ENCODE measurements at regions of chr1 and their contacts with region 1.

Region 1: DNA sequence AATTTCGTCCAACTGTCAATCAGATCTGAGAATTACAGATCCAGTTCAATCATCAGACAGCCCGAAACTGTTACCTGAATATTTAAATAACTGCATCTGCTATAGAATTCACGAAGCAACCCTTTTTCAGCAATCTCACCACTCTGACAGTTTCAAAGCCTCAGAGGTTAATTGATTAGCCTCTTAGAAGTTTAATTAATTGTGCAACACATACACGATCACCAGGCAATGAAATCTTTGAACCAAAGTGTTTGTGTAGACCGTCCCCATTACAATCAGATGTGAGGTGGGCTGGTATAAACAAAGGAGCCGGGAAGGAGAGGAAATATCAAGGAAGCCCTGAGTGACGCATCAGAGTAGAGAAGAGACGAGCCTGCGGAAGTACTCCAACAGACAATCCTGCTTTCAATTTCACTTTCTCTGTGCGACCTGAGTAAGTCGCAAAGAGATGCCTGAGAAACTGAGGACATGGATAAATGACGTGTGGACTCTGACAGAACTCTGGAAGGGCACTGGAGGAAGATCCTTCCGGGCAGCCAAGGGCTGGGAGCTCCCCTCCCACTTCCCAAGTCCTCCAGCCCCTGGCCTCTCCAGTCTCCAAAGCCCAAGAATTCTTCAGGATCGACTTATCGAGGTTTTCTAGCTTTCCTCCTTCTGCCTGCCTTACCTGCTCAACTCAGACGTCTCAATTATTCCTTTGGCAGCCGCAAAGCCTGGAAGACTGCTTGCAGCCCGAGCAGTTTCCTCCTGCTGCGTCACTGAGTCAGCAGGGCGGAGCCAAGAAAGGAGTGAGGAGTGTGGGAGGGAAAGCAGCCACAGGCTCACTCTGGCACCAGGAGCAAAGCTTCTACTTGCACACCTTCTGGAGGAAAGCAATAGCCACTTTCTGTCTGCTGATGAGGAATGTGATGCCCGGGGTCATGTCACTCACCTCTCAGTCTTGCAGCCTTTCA is at the start of gene RNASEL:
- DNase-seq: peak; percentile 61
- H3K4me3 Mint-ChIP-seq: peak within 1 kb of the TSS; percentile 94
- H3K27ac Mint-ChIP-seq: peak within 1 kb of the TSS; percentile 94
- H3K4me1 Mint-ChIP-seq: peaks cover 33% of the 10 kb centered on the region
- H3K27me3 Mint-ChIP-seq: peaks cover 6% of the 10 kb centered on the region
- total RNA-seq, gene RNASEL: 8.4 to 8.8 TPM

Region 2: DNA sequence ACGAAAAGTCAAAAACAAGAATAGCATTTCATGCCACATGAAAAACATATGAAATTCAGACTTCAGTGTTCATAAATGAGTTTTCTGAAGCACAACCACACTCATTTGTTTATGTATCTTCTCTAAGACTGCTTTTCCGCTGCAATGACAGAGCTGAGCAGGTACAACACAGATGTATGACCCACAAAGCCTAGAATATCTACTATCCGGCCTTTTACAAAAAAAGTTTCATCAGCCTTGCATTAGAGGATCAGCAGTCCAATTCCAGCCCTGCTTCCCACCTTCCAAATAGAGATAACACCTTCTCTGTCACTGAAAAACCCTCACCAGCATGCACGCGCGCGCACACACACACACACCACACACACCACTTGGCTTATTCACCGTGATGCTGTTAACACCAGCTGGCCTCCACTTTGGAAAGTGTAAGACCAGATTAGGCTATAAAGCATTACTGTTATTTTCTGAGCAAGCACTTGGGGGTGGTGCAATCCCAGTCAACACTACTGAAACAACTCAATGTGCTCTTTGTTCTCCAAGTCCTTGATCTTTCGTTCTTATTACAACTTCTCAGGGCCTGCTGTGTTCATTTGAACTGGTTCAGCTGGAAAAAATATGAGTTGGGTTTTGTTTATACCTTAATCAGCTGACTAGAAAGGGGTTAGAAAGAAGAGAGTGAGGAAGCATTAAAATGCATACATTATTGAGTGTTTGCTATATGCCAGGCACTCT is 287.1 kb before region 1 on chr1:
- CTCF ChIA-PET with region 1: no interaction called
- POLR2A ChIA-PET with region 1: no interaction called
- DNase-seq: peak; percentile 19
- H3K4me3 Mint-ChIP-seq: no peak overlapping the region
- H3K27ac Mint-ChIP-seq: peak overlapping the region; percentile 66
- H3K4me1 Mint-ChIP-seq: peaks cover 32% of the 10 kb centered on the region
- H3K27me3 Mint-ChIP-seq: peaks cover 1% of the 10 kb centered on the region

Region 3: GRCh38 chr1:182781841-182782586 is 193.2 kb after region 1 on chr1:
- CTCF ChIA-PET with region 1: interaction called, 531 read pairs
- POLR2A ChIA-PET with region 1: interaction called, 5 read pairs
- DNase-seq: peak; percentile 76
- H3K4me3 Mint-ChIP-seq: no peak overlapping the region
- H3K27ac Mint-ChIP-seq: no peak overlapping the region
- H3K4me1 Mint-ChIP-seq: peaks cover 9% of the 10 kb centered on the region
- H3K27me3 Mint-ChIP-seq: peaks cover 11% of the 10 kb centered on the region

Region 4: DNA sequence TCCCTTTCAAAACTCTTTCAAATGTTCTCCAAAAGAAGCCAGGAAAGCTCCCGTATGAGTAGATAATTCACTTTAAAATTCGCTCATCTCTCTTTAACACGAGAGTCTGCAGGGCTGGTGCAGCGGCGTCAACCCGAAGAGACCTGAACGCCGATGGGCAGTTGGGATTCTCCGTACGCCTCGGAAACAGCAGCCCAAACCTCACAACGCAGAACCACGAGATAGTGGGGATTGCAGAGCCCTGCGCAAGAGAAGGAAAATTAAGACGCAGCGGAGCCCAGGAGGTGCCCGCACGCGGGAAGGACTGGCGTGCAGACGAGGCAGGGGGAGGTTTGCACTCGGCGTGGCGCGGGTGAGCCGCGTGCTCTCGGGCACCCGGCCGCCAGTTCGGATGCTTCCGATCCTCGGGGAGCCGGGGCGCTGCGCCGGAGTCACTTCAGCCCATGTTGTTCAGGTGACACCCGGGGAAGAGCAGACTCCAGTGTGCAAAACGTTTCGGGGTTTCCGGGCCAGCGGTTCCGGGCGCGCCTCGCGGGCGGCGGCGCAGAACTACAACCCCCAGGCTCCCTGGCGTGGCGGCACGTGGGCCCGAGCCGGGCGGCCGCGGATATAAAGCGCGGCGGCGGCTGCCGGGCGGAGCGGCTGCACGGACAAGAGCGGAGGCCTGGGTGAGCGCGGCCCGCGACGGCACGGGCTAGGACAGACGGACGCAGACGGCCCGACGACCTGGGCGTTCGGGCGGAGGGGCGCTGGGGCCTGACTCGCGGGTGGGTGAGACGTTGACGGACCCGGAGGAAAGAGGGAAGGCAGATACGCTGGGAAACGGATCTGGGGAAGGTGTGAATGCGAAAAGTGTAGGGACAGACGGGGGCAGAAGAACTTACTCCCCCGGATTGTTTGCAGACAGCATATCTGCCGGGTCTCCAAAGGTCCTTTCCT is 200.6 kb after region 1 on chr1 and contains the start of gene NPL:
- CTCF ChIA-PET with region 1: interaction called, 531 read pairs
- POLR2A ChIA-PET with region 1: interaction called, 12 read pairs
- DNase-seq: peak; percentile 88
- H3K4me3 Mint-ChIP-seq: peak within 1 kb of the TSS; percentile 78
- H3K27ac Mint-ChIP-seq: peak within 1 kb of the TSS; percentile 47
- H3K4me1 Mint-ChIP-seq: peaks cover 15% of the 10 kb centered on the region
- H3K27me3 Mint-ChIP-seq: peaks cover 25% of the 10 kb centered on the region
- total RNA-seq, gene NPL: 3.7 to 5.0 TPM

Region 5: DNA sequence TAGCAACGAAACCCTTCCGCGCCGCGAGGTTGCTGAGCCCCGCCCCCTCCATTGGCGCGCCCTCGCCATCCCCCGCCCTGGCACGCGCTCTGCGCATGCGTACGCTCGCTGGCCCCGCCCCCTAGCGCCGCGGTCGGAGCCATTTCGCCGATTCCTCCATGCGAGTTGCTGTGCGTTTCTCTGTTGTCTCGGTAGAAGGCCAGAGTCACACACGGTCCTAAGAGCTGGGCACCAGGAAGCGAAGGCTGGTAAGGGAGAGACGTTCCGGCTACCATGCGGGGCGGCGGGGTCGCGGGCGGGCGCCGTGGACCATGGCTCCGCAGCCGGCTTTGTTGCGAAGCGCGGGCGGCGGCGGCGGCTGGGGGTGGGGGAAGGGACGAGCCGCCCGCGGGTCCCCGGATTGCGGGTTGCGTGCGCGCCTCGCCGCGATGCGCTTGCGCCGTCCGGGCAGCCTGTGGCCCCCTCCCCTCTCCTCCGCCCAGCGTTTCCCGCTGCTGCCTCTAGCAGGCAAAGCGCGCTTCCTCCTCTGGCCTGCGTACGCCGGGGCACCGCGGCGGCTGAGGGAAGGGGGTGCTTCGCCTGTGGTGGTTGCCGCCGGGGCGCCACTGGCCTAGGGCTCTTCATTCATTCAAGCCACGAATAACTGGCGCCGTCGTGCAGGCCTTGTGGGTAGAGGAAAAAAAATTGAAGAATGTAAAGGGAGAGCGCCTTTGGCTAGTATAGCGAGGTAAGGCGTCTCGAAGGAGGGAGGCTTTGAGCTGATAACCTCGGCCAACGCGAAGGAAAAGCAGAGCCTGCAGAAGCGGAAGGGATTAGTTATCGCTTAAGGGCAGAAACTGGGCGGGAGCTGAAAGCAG is 250.7 kb after region 1 on chr1 and contains the start of gene DHX9:
- CTCF ChIA-PET with region 1: interaction called, 5 read pairs
- POLR2A ChIA-PET with region 1: interaction called, 13 read pairs
- DNase-seq: peak; percentile 95
- H3K4me3 Mint-ChIP-seq: peak within 1 kb of the TSS; percentile 96
- H3K27ac Mint-ChIP-seq: peak within 1 kb of the TSS; percentile 96
- H3K4me1 Mint-ChIP-seq: peaks cover 44% of the 10 kb centered on the region
- H3K27me3 Mint-ChIP-seq: no peaks in the 10 kb centered on the region
- total RNA-seq, gene DHX9: 163 to 171 TPM